A673 (cell line): ENCODE measurements at regions of chr3 and their contacts with region 1.

Region 1: GRCh38 chr3:141530133-141530768 is 43.4 kb downstream of the RASA2 start:
- DNase-seq: peak; percentile 89
- H3K4me3 ChIP-seq: peak overlapping the region; percentile 8
- H3K27ac ChIP-seq: peak overlapping the region; percentile 74
- H3K4me1 ChIP-seq: peaks cover 55% of the 10 kb centered on the region
- H3K27me3 ChIP-seq: no peaks in the 10 kb centered on the region
- CTCF ChIP-seq: no peak

Region 2: GRCh38 chr3:141487521-141488252 is 42.6 kb before region 1 on chr3:
- CTCF ChIA-PET with region 1: no interaction called
- POLR2A ChIA-PET with region 1: no interaction called
- intact Hi-C with region 1: loop called (anchors 5 kb)
- DNase-seq: peak; percentile 82
- H3K4me3 ChIP-seq: peak overlapping the region; percentile 86
- H3K27ac ChIP-seq: peak overlapping the region; percentile 96
- H3K4me1 ChIP-seq: peaks cover 44% of the 10 kb centered on the region
- H3K27me3 ChIP-seq: no peaks in the 10 kb centered on the region
- CTCF ChIP-seq: no peak

Region 3: DNA sequence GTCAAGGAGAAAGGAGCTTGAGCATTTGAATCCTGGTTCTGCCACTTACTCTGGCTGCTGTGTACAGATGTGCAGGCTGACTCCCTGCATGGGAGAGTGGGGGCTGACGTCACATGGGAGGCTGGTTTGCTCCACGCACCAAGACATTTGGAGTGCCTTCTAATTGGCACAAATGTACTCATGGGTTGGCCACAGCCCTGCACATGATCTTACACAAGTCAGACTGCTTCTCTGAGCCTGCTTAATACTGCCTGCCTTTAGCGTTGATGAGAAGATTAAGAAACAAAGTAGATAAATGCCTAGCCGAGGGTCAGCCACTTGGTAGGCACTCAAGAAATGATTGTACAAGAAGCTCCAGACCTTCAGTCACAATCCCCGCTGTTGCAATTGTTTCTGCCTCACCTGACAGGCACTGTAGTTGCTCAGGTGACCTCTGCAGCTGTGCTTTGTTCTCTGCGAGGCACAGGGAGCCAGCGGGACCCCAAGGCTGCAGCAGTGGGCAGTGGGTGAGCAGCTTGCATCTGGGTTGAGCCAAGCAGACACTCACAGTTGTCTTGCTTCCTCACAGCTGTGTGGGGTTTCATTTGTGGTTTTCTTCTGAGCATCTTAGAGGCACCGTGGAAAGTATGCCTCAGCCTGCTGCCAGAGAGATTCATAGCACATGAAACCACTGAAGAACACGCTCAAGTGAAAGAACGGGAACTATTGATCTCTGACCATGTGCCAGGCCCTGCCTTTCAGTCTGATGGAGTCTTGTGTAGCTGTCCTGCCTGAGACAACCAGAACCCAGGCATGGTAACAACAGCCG is 266.0 kb after region 1 on chr3:
- CTCF ChIA-PET with region 1: no interaction called
- POLR2A ChIA-PET with region 1: no interaction called
- intact Hi-C with region 1: no loop called
- DNase-seq: peak; percentile 57
- H3K4me3 ChIP-seq: no peak overlapping the region
- H3K27ac ChIP-seq: no peak overlapping the region
- H3K4me1 ChIP-seq: peaks cover 34% of the 10 kb centered on the region
- H3K27me3 ChIP-seq: no peaks in the 10 kb centered on the region
- CTCF ChIP-seq: no peak